ENCODE measurements at regions of chr13 and their contacts with region 1.

Region 1: DNA sequence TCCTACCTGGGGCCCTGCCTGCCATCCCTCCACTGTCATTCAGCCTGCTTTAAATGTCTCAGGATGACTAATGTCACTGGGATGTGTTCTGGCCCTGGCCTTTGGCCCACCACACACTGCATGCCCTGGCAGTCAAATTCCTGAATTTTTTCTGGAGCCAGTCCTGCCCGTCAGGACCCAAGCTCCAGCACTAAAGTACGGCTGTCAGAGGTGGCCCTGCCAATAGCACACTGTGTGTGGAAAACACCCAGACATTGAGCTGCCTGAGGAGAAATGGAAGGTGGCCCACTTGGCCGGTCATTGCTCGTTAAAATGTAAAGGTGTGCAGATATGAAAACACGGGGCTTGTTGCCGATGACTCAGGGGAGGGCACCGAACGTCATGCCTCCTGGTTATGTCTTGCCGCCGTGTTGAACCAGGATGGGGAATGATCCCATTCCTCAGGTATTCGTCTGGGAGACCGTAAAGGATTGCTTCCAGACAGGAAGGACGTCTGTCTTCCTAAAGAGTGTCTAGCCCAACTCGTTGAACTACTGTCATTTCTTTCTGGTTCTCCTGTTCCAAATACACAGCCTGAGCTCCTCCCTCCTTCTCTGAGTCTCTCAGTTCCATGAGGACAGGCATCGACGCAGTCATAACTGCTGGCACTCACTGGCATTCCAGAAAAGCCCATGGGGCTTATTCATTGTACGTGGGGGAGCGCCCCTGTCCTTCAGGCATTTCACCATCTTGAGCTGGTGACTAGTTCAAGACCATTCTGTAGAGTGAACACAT is 40.6 kb downstream of the COL4A2 start:
- DNase-seq: no peak
- H3K4me3 ChIP-seq: no peak overlapping the region
- H3K27ac ChIP-seq: peak overlapping the region; percentile 11
- H3K4me1 ChIP-seq: peaks cover 5% of the 10 kb centered on the region
- H3K27me3 ChIP-seq: no peaks in the 10 kb centered on the region
- CTCF ChIP-seq: no peak

Region 2: GRCh38 chr13:110233181-110233950 is 114.4 kb before region 1 on chr13:
- intact Hi-C with region 1: no loop called
- DNase-seq: no peak
- H3K4me3 ChIP-seq: no peak overlapping the region
- H3K27ac ChIP-seq: peak overlapping the region; percentile 31
- H3K4me1 ChIP-seq: no peaks in the 10 kb centered on the region
- H3K27me3 ChIP-seq: no peaks in the 10 kb centered on the region
- CTCF ChIP-seq: no peak

Region 3: GRCh38 chr13:110306960-110307746 is 40.6 kb before region 1 on chr13 and contains the starts of genes COL4A1 and COL4A2:
- intact Hi-C with region 1: loop called (anchors 5 kb)
- DNase-seq: peak; percentile 54
- H3K4me3 ChIP-seq: peak within 1 kb of the TSS; percentile 48
- H3K27ac ChIP-seq: peak within 1 kb of the TSS; percentile 84
- H3K4me1 ChIP-seq: no peaks in the 10 kb centered on the region
- H3K27me3 ChIP-seq: peaks cover 28% of the 10 kb centered on the region
- CTCF ChIP-seq: no peak
- total RNA-seq, gene COL4A1: 27.0 to 97.0 TPM
- total RNA-seq, gene COL4A2: 61.1 to 111 TPM